Dendritic cell treated with granulocyte-macrophage colony-stimulating factor and Interleukin-4, amounts not matched to agents 40 ng/mL and 50 ng/mL, for 4 days (primary cell): ENCODE measurements at regions of chr2 and their contacts with region 1.

Region 1: DNA sequence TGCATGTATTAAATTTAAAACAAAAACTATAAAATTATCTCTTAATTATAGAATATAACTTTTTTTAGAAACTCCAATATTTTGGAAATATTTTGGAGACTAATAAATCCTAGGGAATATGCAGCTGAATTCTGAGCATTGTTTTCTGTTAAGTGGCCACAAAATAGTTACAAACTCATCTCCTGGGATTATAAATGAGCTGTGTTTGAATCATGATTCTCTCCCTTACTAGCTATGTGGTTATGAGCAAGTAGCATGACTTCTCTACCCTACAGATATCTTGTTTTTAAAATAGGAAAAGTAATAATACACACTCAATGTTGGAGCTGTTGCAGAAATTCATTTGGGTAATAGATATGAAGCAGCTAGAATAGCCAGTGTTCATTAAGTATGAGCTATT is 137.9 kb upstream of the ITGA4 start:
- H3K4me3 Mint-ChIP-seq: no peak overlapping the region
- H3K27ac Mint-ChIP-seq: no peak overlapping the region
- H3K4me1 Mint-ChIP-seq: peaks cover under 1% of the 10 kb centered on the region
- H3K27me3 Mint-ChIP-seq: no peaks in the 10 kb centered on the region

Region 2: GRCh38 chr2:181354626-181355025 is 35.3 kb after region 1 on chr2:
- intact Hi-C with region 1: loop called (anchors 5 kb)
- H3K4me3 Mint-ChIP-seq: no peak overlapping the region
- H3K27ac Mint-ChIP-seq: no peak overlapping the region
- H3K4me1 Mint-ChIP-seq: peaks cover 31% of the 10 kb centered on the region
- H3K27me3 Mint-ChIP-seq: no peaks in the 10 kb centered on the region